HCT116 (cell line): ENCODE measurements at regions of chr16 and their contacts with region 1.

Region 1: GRCh38 chr16:66830422-66831404 is at the start of gene NAE1:
- DNase-seq: peak; percentile 76
- ATAC-seq: peak; percentile 95
- H3K4me3 ChIP-seq: peak within 1 kb of the TSS; percentile 79 to 90
- H3K27ac ChIP-seq: peak within 1 kb of the TSS; percentile 82
- H3K4me1 ChIP-seq: peaks cover 7 to 13% of the 10 kb centered on the region in 2 experiments
- H3K27me3 ChIP-seq: no peaks in the 10 kb centered on the region
- CTCF ChIP-seq: peak; percentile 73 to 92 (median 90)
- POLR2A ChIP-seq: peak; percentile 52
- RAD21 ChIP-seq: peak; percentile 58
- total RNA-seq, gene NAE1: 123 TPM

Region 2: DNA sequence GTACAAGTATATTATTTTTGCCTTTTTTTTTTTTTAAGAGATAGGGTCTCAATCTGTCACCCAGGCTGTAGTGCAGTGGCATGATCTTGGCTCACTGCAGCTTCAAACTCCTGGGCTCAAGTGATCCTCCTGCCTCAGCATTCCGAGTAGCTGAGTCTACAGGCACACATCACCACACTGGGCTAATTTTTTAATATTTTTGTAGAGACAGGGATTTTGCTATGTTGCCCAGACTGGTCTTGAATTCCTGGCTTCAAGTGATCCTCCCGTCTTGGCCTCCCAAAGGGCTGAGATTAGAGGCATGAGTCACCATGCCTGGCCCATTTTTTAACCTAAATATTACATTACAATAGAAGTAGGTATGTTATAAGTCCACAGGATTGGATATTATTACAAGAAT is 32.6 kb before region 1 on chr16:
- CTCF ChIA-PET with region 1: interaction called, 12 read pairs
- POLR2A ChIA-PET with region 1: no interaction called
- RAD21 ChIA-PET with region 1: no interaction called
- intact Hi-C with region 1: no loop called
- DNase-seq: no peak
- ATAC-seq: no peak
- H3K4me3 ChIP-seq: no peak overlapping the region
- H3K27ac ChIP-seq: no peak overlapping the region
- H3K4me1 ChIP-seq: no peaks in the 10 kb centered on the region
- H3K27me3 ChIP-seq: no peaks in the 10 kb centered on the region
- CTCF ChIP-seq: no peak
- POLR2A ChIP-seq: no peak
- RAD21 ChIP-seq: no peak

Region 3: GRCh38 chr16:66844342-66845079 is 13.8 kb after region 1 on chr16 and contains the start of gene CA7:
- CTCF ChIA-PET with region 1: interaction called, 29 read pairs
- POLR2A ChIA-PET with region 1: interaction called, 3 read pairs
- RAD21 ChIA-PET with region 1: no interaction called
- intact Hi-C with region 1: no loop called
- DNase-seq: no peak
- ATAC-seq: no peak
- H3K4me3 ChIP-seq: no peak within 1 kb of the TSS
- H3K27ac ChIP-seq: no peak within 1 kb of the TSS
- H3K4me1 ChIP-seq: peaks cover 7 to 16% of the 10 kb centered on the region in 2 experiments; a peak in 3 of 4 replicates
- H3K27me3 ChIP-seq: no peaks in the 10 kb centered on the region
- CTCF ChIP-seq: no peak
- POLR2A ChIP-seq: no peak
- RAD21 ChIP-seq: no peak
- total RNA-seq, gene CA7: not detected

Region 4: GRCh38 chr16:66850115-66850815 is 19.6 kb after region 1 on chr16:
- CTCF ChIA-PET with region 1: interaction called, 16 read pairs
- POLR2A ChIA-PET with region 1: interaction called, 3 read pairs
- RAD21 ChIA-PET with region 1: no interaction called
- intact Hi-C with region 1: no loop called
- DNase-seq: no peak
- ATAC-seq: no peak
- H3K4me3 ChIP-seq: no peak overlapping the region
- H3K27ac ChIP-seq: no peak overlapping the region
- H3K4me1 ChIP-seq: peaks cover 4 to 9% of the 10 kb centered on the region in 2 experiments; a peak in 3 of 4 replicates
- H3K27me3 ChIP-seq: no peaks in the 10 kb centered on the region
- CTCF ChIP-seq: no peak
- POLR2A ChIP-seq: no peak
- RAD21 ChIP-seq: no peak

Region 5: GRCh38 chr16:66872943-66873684 is 42.4 kb after region 1 on chr16:
- CTCF ChIA-PET with region 1: interaction called, 32 read pairs
- POLR2A ChIA-PET with region 1: interaction called, 5 read pairs
- RAD21 ChIA-PET with region 1: interaction called, 13 to 15 read pairs
- intact Hi-C with region 1: no loop called
- DNase-seq: peak; percentile 89
- ATAC-seq: peak; percentile 95
- H3K4me3 ChIP-seq: peak overlapping the region; percentile 42 to 57
- H3K27ac ChIP-seq: peak overlapping the region; percentile 65
- H3K4me1 ChIP-seq: peaks cover 12 to 27% of the 10 kb centered on the region in 2 experiments
- H3K27me3 ChIP-seq: no peaks in the 10 kb centered on the region
- CTCF ChIP-seq: peak; percentile 74 to 95 (median 91)
- POLR2A ChIP-seq: no peak
- RAD21 ChIP-seq: no peak